Activated CD8-positive, alpha-beta T cell treated with anti-CD3 and anti-CD28 coated beads, Interleukin-2, amount 10 ng/mL, durations not matched to agents 7 days and 5 days (primary cell): ENCODE measurements at regions of chr7 and their contacts with region 1.

Region 1: DNA sequence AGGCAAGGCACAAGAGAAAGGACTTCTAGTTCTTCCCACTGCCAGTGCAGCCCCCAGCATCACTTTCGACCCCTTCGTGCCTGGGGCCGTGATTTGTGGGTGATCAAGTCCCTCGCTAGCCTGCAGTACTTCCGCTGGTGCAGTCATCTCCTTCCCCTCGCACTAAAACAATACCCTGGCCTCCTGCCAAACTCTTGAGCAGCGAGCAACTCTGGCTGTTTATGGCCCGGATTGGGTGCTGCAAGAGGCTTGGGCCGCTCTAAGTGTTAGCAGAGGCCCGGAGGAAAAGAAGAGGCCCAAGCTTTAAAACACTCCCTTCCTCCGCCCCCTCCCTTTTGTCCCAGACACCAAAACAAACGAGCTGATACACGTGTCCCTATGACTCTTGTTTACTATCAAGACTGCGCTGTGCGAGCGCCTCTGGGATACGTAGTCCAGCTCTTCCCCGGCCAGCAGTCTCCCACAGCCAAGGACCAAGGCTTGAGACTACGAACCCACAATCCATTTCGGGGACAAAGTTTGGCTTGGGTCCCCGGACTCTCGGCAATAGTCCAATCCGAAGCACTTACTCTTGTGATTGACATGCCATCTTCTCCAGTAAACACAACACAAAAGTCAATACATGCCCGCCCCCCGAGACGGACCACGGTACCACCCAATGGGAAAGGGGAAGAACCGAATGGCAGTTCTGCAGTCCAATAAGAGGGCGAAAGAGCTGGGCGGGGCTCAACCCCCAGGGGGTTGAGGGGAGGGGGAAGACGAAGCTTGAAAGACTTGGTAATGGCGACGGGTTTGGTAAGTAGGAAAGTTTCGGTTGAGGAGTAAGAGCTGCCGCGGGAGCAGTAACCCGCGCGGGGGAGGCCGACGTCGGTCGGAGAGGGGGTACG is at the start of gene HBP1:
- DNase-seq: peak; percentile 98
- ATAC-seq: peak; percentile 91
- H3K4me3 Mint-ChIP-seq: peak within 1 kb of the TSS; percentile 82
- H3K27ac Mint-ChIP-seq: peak within 1 kb of the TSS; percentile 99
- H3K4me1 Mint-ChIP-seq: peaks cover 28% of the 10 kb centered on the region
- H3K27me3 Mint-ChIP-seq: peaks cover 9% of the 10 kb centered on the region
- total RNA-seq, gene HBP1: 17.2 to 17.3 TPM

Region 2: DNA sequence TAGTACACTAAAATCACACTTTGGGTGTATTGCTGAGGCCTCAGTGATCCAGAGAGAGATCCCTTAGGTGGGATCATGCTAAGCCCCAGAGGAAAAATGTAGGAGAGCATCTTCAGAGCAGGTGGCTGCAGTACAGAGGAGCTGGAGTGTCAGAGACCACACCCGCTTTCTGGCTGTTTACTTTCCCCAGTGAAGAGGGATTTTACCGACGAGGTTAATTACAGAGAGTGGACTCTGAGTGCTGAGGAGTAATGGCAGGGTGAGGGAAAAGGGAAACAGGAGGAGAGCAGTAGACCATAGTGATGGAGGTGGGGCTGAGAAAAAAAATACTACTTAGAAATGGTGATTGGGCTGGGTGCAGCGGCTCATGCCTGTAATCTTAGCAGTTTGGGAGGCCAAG is 43.0 kb before region 1 on chr7:
- CTCF ChIA-PET with region 1: no interaction called
- POLR2A ChIA-PET with region 1: interaction called, 11 read pairs
- DNase-seq: no peak
- ATAC-seq: no peak
- H3K4me3 Mint-ChIP-seq: peak overlapping the region; percentile 67
- H3K27ac Mint-ChIP-seq: peak overlapping the region; percentile 96
- H3K4me1 Mint-ChIP-seq: peaks cover 24% of the 10 kb centered on the region
- H3K27me3 Mint-ChIP-seq: no peaks in the 10 kb centered on the region

Region 3: GRCh38 chr7:107180378-107180777 is 11.9 kb after region 1 on chr7:
- CTCF ChIA-PET with region 1: interaction called, 3 read pairs
- POLR2A ChIA-PET with region 1: interaction called, 11 read pairs
- DNase-seq: no peak
- ATAC-seq: peak; percentile 47
- H3K4me3 Mint-ChIP-seq: no peak overlapping the region
- H3K27ac Mint-ChIP-seq: peak overlapping the region; percentile 12
- H3K4me1 Mint-ChIP-seq: peaks cover 11% of the 10 kb centered on the region
- H3K27me3 Mint-ChIP-seq: no peaks in the 10 kb centered on the region